MCF 10A (cell line): ENCODE measurements at regions of chr3 and their contacts with region 1.

Region 1: DNA sequence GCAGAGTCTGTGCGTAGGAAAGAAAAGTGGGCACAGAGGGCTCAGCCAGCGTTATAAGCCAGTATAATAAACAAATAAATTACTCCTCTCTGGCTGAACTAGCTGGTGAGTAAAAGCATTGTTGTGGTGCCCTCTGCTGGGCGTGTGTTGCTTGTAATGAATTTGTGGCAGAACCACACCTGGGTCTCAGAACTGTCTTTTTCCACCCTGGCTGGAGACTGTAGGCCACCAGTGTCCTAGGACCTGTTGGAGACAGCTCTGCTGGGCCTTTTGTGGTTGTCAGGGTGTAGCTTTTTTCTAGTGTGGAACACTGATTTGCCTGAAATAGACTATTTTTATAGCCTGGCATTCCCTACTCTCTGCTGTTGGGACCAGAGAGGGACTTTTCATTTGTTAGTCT is 130.5 kb upstream of the EIF1B start:
- DNase-seq: peak; percentile 80
- H3K4me3 Mint-ChIP-seq: no peak overlapping the region
- H3K27ac Mint-ChIP-seq: no peak overlapping the region
- H3K4me1 Mint-ChIP-seq: no peaks in the 10 kb centered on the region
- H3K27me3 Mint-ChIP-seq: no peaks in the 10 kb centered on the region
- CTCF ChIP-seq: peak; percentile 79

Region 2: DNA sequence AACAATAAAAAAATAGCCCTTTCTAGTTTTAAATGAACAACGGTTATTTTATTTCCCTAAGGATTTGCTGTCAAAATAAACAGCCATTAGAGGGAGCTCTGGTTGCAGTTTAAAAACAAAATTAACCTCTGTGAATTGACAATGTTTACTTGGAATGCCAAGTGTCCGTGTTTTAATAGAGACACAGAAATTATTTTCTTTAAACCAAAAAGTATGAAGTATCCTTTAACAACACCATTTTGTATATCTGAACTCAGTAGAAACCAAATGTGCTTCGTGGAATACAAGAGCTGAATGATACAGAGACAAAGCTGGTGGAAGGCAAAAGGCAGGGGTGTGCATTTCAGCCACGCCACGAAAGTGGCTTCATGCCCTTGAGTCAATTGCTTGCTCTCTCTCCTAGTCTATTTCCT is 637.1 kb before region 1 on chr3:
- CTCF ChIA-PET with region 1: interaction called, 106 read pairs
- POLR2A ChIA-PET with region 1: interaction called, 6 read pairs
- intact Hi-C with region 1: loop called (anchors 1 kb)
- DNase-seq: peak; percentile 49
- H3K4me3 Mint-ChIP-seq: no peak overlapping the region
- H3K27ac Mint-ChIP-seq: no peak overlapping the region
- H3K4me1 Mint-ChIP-seq: no peaks in the 10 kb centered on the region
- H3K27me3 Mint-ChIP-seq: no peaks in the 10 kb centered on the region
- CTCF ChIP-seq: peak; percentile 32

Region 3: GRCh38 chr3:39639344-39640236 is 539.4 kb before region 1 on chr3:
- CTCF ChIA-PET with region 1: interaction called, 3 read pairs
- POLR2A ChIA-PET with region 1: interaction called, 3 read pairs
- intact Hi-C with region 1: loop called (anchors 1 kb)
- DNase-seq: peak; percentile 92
- H3K4me3 Mint-ChIP-seq: no peak overlapping the region
- H3K27ac Mint-ChIP-seq: peak overlapping the region; percentile 35
- H3K4me1 Mint-ChIP-seq: peaks cover 22% of the 10 kb centered on the region
- H3K27me3 Mint-ChIP-seq: no peaks in the 10 kb centered on the region
- CTCF ChIP-seq: no peak

Region 4: DNA sequence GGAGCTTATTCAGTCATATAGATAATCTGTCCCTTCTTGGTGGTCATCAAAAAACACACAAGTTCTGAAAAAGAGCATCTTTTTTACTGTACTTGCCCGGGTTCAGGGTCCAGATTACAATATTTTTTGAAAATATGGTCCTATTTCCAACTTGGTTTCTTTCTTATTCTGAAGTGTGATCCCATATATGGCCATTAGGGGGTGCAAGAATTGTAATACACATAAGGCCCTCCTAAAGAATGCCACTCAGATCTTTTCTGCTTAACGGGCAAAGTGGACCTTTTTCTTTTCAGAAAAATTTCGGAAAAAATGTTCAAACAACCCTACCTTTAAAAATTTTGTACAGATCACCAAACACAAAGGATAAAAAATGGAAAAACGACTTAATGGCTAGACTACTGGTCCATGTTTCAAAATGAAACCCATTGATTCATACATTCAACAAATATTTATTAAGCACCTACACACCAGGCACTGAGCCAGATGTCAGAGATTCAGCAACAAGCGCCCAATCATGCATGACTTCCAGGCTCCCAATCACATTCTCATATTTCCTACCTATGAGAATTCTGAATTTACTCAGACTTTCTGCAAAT is 471.6 kb before region 1 on chr3:
- CTCF ChIA-PET with region 1: interaction called, 46 read pairs
- POLR2A ChIA-PET with region 1: no interaction called
- intact Hi-C with region 1: loop called (anchors 1 kb)
- DNase-seq: peak; percentile 43
- H3K4me3 Mint-ChIP-seq: no peak overlapping the region
- H3K27ac Mint-ChIP-seq: no peak overlapping the region
- H3K4me1 Mint-ChIP-seq: peaks cover 9% of the 10 kb centered on the region
- H3K27me3 Mint-ChIP-seq: no peaks in the 10 kb centered on the region
- CTCF ChIP-seq: peak; percentile 32

Region 5: GRCh38 chr3:39724233-39724846 is 454.7 kb before region 1 on chr3:
- CTCF ChIA-PET with region 1: interaction called, 54 read pairs
- POLR2A ChIA-PET with region 1: no interaction called
- intact Hi-C with region 1: loop called (anchors 2 kb)
- DNase-seq: no peak
- H3K4me3 Mint-ChIP-seq: no peak overlapping the region
- H3K27ac Mint-ChIP-seq: no peak overlapping the region
- H3K4me1 Mint-ChIP-seq: no peaks in the 10 kb centered on the region
- H3K27me3 Mint-ChIP-seq: no peaks in the 10 kb centered on the region
- CTCF ChIP-seq: peak; percentile 17

Region 6: DNA sequence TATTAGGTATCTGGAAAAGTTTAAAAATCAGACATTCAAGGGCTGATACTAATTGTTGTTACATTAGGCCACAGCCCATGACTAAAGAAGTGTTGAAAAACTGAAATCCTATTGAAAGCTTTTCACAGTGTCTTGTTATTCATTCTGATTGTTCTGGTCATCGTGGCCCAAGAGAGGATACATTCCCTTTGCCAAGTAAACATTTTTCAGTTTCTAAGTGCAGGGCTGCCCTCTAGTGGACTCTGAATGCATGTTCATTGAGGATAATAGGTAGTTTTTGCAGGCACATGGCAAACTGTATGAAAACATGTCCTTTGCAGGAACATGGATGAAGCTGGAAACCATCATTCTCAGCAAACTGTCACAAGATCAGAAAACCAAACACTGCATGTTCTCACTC is 188.5 kb before region 1 on chr3:
- CTCF ChIA-PET with region 1: interaction called, 9 read pairs
- POLR2A ChIA-PET with region 1: no interaction called
- intact Hi-C with region 1: loop called (anchors 2 kb)
- DNase-seq: peak; percentile 80
- H3K4me3 Mint-ChIP-seq: no peak overlapping the region
- H3K27ac Mint-ChIP-seq: no peak overlapping the region
- H3K4me1 Mint-ChIP-seq: no peaks in the 10 kb centered on the region
- H3K27me3 Mint-ChIP-seq: no peaks in the 10 kb centered on the region
- CTCF ChIP-seq: peak; percentile 68

Region 7: DNA sequence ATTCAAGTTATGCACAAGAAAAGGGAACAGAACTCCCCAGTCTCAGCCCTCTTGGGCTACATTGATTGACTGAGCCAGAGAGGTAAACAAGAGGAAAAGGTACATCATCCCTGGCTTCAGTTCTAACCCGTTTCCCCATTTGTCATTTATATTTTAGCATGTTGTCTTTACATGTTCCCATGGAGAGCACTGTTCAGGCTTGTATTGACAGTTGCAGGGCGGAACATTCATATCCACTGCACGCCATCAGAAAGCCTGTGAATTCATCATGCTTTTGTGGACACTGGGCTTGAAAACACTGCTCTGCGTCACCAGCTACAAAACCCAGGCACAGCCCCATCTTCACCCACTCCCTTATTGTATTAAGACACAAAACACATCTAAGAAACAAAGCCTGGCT is 110.4 kb before region 1 on chr3:
- CTCF ChIA-PET with region 1: no interaction called
- POLR2A ChIA-PET with region 1: no interaction called
- intact Hi-C with region 1: no loop called
- DNase-seq: no peak
- H3K4me3 Mint-ChIP-seq: no peak overlapping the region
- H3K27ac Mint-ChIP-seq: no peak overlapping the region
- H3K4me1 Mint-ChIP-seq: peaks cover 12% of the 10 kb centered on the region
- H3K27me3 Mint-ChIP-seq: no peaks in the 10 kb centered on the region
- CTCF ChIP-seq: no peak

Region 8: DNA sequence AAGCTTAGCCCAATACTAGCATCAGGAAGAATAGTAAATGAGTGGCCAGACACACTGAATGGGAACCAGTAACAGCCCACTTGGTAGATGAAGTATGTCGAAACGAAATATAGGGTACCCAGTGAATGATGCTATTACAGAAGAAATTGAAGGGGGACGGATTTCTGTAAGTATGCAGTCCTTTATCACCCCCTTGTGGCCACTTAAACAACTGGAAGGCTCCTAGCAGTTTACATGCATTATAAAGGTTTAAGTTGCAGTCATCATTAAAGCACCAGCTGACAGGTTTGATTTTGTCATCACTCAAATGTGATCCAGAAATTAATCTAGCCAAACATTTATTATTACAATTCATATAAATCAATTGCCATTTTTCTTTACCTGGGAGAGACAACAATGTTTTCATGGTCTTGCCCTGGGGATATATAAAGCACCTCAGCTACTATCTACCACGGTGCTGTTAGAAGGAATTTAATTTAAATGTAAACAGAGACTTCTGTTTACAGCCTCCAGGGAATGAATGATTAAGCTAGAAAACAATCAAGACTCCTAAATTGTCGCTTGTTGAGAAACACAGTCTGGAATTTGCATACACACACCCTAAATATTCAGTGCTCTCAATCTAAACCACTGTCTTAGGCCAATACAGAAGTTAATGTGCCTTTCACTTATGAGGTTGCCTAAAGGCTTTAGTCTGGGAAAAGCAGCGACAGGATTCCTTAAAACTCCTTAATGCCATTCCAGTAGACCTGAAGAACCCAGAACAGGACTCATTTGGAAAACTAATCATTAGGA is 138.2 kb after region 1 on chr3:
- CTCF ChIA-PET with region 1: interaction called, 25 read pairs
- POLR2A ChIA-PET with region 1: no interaction called
- intact Hi-C with region 1: no loop called
- DNase-seq: peak; percentile 68
- H3K4me3 Mint-ChIP-seq: no peak overlapping the region
- H3K27ac Mint-ChIP-seq: no peak overlapping the region
- H3K4me1 Mint-ChIP-seq: peaks cover 5% of the 10 kb centered on the region
- H3K27me3 Mint-ChIP-seq: no peaks in the 10 kb centered on the region
- CTCF ChIP-seq: peak; percentile 73